ENCODE measurements at regions of chr7 and their contacts with region 1.

Region 1: DNA sequence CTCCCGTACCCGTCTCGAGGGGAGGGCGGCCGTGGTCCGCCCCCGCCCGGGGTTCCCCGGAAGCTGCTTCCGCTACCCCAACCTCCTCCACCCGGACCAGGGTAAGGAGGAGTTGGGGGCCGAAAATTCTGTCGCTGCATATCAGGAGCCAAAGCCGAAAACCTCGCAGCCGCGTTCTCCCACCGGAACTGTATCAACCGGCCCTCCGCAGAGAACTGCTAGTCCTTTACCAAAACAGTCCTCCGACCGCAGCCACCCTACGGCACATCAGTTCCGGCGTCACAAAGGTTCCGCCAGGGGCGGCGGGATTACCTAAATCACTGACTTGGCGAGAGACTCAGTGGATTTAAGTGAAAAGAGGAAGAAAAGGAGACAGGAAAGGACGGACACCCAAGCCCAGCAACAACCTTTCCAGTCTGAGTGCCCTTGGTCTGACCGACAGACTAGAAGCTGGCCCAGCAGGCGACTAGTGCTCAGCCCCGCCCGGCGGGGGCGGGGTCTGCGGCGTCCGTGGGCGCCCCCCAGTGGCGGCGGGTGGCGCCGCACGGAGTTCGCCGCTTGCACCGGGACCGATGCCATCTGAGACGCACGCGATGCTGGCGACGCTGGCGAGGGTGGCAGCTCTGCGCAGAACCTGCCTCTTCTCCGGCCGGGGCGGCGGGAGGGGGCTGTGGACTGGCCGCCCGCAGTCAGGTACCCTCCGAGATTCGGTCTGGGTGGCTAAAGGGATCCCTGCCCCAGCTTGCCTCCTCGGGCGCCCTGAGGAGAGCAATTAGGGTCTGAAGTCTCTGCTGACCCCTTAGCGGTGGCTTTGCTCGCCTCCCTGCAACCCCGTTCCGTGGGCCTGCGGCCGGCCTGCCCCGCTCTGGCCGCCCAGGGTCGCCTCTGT is at the starts of genes MPLKIP and SUGCT:
- DNase-seq: peak; percentile 87 to 93
- ATAC-seq: peak; percentile 99
- H3K4me3 ChIP-seq: peak within 1 kb of the TSS; percentile 88 to 89
- H3K27ac ChIP-seq: peak within 1 kb of the TSS; percentile 36 to 81
- H3K4me1 ChIP-seq: no peaks in the 10 kb centered on the region
- H3K27me3 ChIP-seq: no peaks in the 10 kb centered on the region
- total RNA-seq, gene MPLKIP: 17.8 to 25.8 TPM
- total RNA-seq, gene SUGCT: 37.9 to 47.1 TPM

Region 2: GRCh38 chr7:39949980-39950472 is 184.6 kb before region 1 on chr7 and contains the start of gene CDK13:
- intact Hi-C with region 1: loop called in 1 of 2 experiments (anchors 10 kb)
- DNase-seq: peak; percentile 90 to 91
- ATAC-seq: peak; percentile 83
- H3K4me3 ChIP-seq: peak within 1 kb of the TSS; percentile 73 to 87
- H3K27ac ChIP-seq: peak within 1 kb of the TSS; percentile 86 to 94
- H3K4me1 ChIP-seq: no peaks in the 10 kb centered on the region
- H3K27me3 ChIP-seq: no peaks in the 10 kb centered on the region
- total RNA-seq, gene CDK13: 52.7 to 83.8 TPM

Measured in aorta (tissue), 5 donors.